CD8-positive, alpha-beta memory T cell (primary cell): ENCODE measurements at regions of chr12 and their contacts with region 1.

Region 1: DNA sequence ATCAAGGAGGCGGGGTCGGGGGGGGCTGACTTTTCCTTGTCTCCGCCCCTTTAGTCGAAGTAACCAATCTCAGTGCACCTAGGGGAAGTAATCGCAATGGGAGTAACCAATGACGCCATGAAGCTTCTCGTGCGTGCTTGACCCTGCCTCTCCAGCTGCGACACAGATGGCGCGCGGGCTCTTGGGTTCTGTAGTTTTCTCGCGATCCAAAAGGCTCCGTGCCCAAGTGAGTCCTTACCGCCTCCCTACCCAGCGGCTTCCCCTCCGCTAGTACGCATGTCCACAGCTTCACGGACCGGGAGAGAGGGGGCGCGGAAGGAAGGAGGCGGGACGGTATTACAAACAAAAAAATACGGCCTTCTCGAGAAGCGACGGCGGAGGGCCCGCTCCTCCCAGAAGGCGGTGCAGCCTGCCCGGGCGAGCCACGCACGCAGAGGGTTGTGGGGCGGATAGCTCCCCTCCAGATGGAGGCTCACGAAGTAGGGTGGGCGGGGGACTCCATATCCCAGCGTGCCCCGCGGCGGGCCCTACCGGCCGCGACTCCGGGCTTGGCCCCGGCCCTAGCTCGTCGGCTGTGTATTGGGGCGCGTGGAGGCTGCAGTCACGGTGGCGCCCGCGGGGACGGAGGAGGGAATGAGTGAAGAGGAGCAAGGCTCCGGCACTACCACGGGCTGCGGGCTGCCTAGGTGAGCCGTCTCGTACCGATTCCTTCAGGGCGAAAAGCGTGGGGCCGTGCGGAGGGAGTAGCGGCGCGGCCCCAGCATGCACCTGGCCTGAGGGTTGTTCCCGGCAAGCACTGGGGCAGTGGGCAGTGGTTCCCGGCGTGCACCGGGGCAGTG is at the start of gene TARBP2:
- DNase-seq: peak; percentile 95 to 99 (median 98)
- H3K4me3 ChIP-seq: peak within 1 kb of the TSS; percentile 66
- H3K4me3 Mint-ChIP-seq: peak within 1 kb of the TSS; percentile 78 to 96 (median 91)
- H3K27ac ChIP-seq: peak within 1 kb of the TSS; percentile 94
- H3K27ac Mint-ChIP-seq: peak within 1 kb of the TSS; percentile 91 to 100 (median 96)
- H3K4me1 ChIP-seq: peaks cover 31% of the 10 kb centered on the region
- H3K4me1 Mint-ChIP-seq: peaks cover 28 to 56% (median 43%) of the 10 kb centered on the region in 3 donors
- H3K27me3 ChIP-seq: no peaks in the 10 kb centered on the region
- H3K27me3 Mint-ChIP-seq: no peaks in the 10 kb centered on the region
- total RNA-seq, gene TARBP2: 62.1 to 65.1 TPM

Region 2: DNA sequence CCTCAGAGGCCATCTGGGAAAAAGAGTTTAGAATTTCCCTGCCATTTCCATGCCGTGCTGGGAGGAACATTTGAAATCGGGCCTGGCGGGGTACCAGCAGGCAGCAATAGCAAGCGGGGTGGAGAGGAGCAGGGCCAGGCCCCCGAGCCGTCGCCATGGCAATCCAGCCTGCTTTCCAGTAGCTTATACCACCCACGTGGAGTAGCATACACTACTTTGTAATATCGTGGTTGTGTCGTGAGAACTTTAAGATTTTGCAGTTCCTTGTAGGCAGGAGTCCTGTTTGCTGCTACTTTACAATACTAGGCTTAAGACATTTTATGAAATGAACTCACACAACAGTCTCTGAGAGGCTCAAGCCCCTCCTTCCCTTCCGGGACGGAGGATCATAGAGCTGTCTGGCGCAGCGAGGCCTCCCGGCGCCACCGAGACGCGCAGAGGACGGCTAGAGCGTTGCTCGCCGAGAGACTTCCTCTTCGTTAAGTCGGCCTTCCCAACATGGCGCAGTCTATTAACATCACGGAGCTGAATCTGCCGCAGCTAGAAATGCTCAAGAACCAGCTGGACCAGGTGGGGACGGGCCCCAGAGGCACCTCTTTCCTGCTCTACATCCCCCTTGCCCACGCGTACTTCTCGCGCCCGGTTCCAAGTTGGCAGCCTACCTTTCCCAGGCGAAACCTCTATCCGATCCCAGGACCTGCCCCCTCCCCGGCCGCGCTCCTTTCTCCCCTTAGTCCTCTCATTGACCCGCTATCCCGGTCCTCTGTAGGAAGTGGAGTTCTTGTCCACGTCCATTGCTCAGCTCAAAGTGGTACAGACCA is 205.7 kb before region 1 on chr12 and contains the start of gene PFDN5:
- CTCF ChIA-PET with region 1: interaction called, 3 read pairs
- POLR2A ChIA-PET with region 1: interaction called, 13 read pairs
- DNase-seq: peak; percentile 72 to 93 (median 87)
- H3K4me3 ChIP-seq: peak within 1 kb of the TSS; percentile 90
- H3K4me3 Mint-ChIP-seq: peak within 1 kb of the TSS; percentile 97 to 100 (median 100)
- H3K27ac ChIP-seq: peak within 1 kb of the TSS; percentile 87
- H3K27ac Mint-ChIP-seq: peak within 1 kb of the TSS; percentile 93 to 100 (median 99)
- H3K4me1 ChIP-seq: peaks cover 41% of the 10 kb centered on the region
- H3K4me1 Mint-ChIP-seq: peaks cover 43 to 53% (median 47%) of the 10 kb centered on the region in 3 donors
- H3K27me3 ChIP-seq: no peaks in the 10 kb centered on the region
- H3K27me3 Mint-ChIP-seq: no peaks in the 10 kb centered on the region
- total RNA-seq, gene PFDN5: 380 to 385 TPM

Region 3: DNA sequence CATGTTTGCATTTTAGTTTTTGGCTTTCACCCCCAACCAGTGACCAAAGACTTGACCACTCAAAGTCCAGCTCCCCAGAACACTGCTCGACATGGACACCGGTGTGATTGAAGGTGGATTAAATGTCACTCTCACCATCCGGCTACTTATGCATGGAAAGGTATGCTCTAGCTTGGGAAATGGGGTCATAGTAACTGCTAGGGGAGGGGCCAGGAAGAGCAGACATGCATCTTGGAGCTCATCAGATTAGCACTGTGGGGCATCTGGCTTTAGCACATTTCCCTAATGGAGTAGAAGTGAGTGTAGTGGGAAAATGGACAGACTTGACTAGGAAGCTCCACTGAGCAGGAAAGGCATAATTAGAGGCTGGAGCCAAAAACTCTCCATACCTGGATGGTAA is 46.3 kb before region 1 on chr12:
- CTCF ChIA-PET with region 1: interaction called, 3 read pairs
- POLR2A ChIA-PET with region 1: interaction called, 13 read pairs
- DNase-seq: no peak
- H3K4me3 ChIP-seq: no peak overlapping the region
- H3K4me3 Mint-ChIP-seq: peak overlapping the region in 6 of 7 donors; percentile 13 to 100 (median 79)
- H3K27ac ChIP-seq: no peak overlapping the region
- H3K27ac Mint-ChIP-seq: peak overlapping the region in 3 of 8 donors; percentile 23 to 66 (median 35)
- H3K4me1 ChIP-seq: peaks cover 24% of the 10 kb centered on the region
- H3K4me1 Mint-ChIP-seq: peaks cover 35 to 46% (median 45%) of the 10 kb centered on the region in 3 donors
- H3K27me3 ChIP-seq: no peaks in the 10 kb centered on the region
- H3K27me3 Mint-ChIP-seq: peaks cover 0 to 2% of the 10 kb centered on the region in 2 donors